H1 (cell line): ENCODE measurements at regions of chr5 and their contacts with region 1.

Region 1: GRCh38 chr5:147417135-147417813 is 92.6 kb downstream of the DPYSL3 start:
- DNase-seq: no peak
- H3K4me3 ChIP-seq: no peak overlapping the region
- H3K27ac ChIP-seq: no peak overlapping the region
- H3K4me1 ChIP-seq: no peaks in the 10 kb centered on the region; a peak in 1 of 7 replicates
- H3K27me3 ChIP-seq: no peaks in the 10 kb centered on the region
- CTCF ChIP-seq: no peak
- EP300 ChIP-seq: no peak
- POLR2A ChIP-seq: no peak
- RAD21 ChIP-seq: no peak

Region 2: DNA sequence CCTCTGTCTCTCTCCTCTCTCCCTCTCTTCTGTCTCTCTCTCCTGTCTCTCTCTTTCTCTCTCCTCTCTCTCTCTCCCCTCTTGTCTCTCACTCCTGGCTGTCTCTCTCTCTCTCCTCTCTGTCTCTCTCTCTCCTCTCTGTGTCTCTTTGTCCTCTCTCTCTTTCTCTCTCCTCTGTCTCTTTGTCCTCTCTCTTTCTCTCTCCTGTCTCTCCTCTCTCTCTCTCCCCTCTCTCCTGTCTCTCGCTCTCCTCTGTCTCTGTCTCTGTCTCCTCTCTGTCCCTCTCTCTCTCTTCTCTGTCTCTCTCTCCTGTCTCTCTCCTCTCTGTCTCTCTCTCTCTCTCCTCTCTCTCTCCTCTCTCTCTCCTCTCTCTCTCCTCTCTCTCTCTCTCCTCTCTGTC is 157.4 kb before region 1 on chr5:
- CTCF ChIA-PET with region 1: no interaction called
- POLR2A ChIA-PET with region 1: no interaction called
- DNase-seq: no peak
- H3K4me3 ChIP-seq: no peak overlapping the region
- H3K27ac ChIP-seq: no peak overlapping the region
- H3K4me1 ChIP-seq: peaks cover 0 to 3% (median 0%) of the 10 kb centered on the region in 4 experiments; a peak in 1 of 7 replicates
- H3K27me3 ChIP-seq: no peaks in the 10 kb centered on the region
- CTCF ChIP-seq: no peak
- EP300 ChIP-seq: no peak
- POLR2A ChIP-seq: no peak
- RAD21 ChIP-seq: no peak

Region 3: GRCh38 chr5:147397616-147398015 is 19.7 kb before region 1 on chr5:
- CTCF ChIA-PET with region 1: interaction called, 18 read pairs
- POLR2A ChIA-PET with region 1: no interaction called
- DNase-seq: no peak
- H3K4me3 ChIP-seq: no peak overlapping the region
- H3K27ac ChIP-seq: no peak overlapping the region
- H3K4me1 ChIP-seq: no peaks in the 10 kb centered on the region
- H3K27me3 ChIP-seq: no peaks in the 10 kb centered on the region
- CTCF ChIP-seq: peak; percentile 28 to 61 (median 54)
- EP300 ChIP-seq: no peak
- POLR2A ChIP-seq: peak in 1 of 2 experiments; percentile 40; a peak in 1 of 3 replicates
- RAD21 ChIP-seq: peak; percentile 14 to 41; a peak in 2 of 4 replicates

Region 4: GRCh38 chr5:147403651-147404640 is 13.3 kb before region 1 on chr5:
- CTCF ChIA-PET with region 1: no interaction called
- POLR2A ChIA-PET with region 1: interaction called, 12 read pairs
- DNase-seq: no peak
- H3K4me3 ChIP-seq: no peak overlapping the region
- H3K27ac ChIP-seq: no peak overlapping the region
- H3K4me1 ChIP-seq: no peaks in the 10 kb centered on the region
- H3K27me3 ChIP-seq: no peaks in the 10 kb centered on the region
- CTCF ChIP-seq: no peak
- EP300 ChIP-seq: no peak
- POLR2A ChIP-seq: no peak
- RAD21 ChIP-seq: no peak

Region 5: GRCh38 chr5:147628058-147628895 is 211.0 kb after region 1 on chr5:
- CTCF ChIA-PET with region 1: no interaction called
- POLR2A ChIA-PET with region 1: no interaction called
- DNase-seq: peak; percentile 25 to 82
- H3K4me3 ChIP-seq: no peak overlapping the region
- H3K27ac ChIP-seq: no peak overlapping the region
- H3K4me1 ChIP-seq: no peaks in the 10 kb centered on the region; a peak in 1 of 7 replicates
- H3K27me3 ChIP-seq: no peaks in the 10 kb centered on the region
- CTCF ChIP-seq: peak in 2 of 3 experiments; percentile 77 to 88; a peak in 3 of 4 replicates
- EP300 ChIP-seq: no peak
- POLR2A ChIP-seq: no peak
- RAD21 ChIP-seq: peak; percentile 86 to 93